PC-3 (cell line): ENCODE measurements at regions of chr17 and their contacts with region 1.

Region 1: GRCh38 chr17:45934044-45934979 is 40.0 kb downstream of the MAPT start:
- DNase-seq: no peak
- ATAC-seq: no peak
- H3K4me3 ChIP-seq: no peak overlapping the region
- H3K27ac ChIP-seq: no peak overlapping the region
- H3K4me1 ChIP-seq: no peaks in the 10 kb centered on the region
- H3K27me3 ChIP-seq: 0 out of 2 replicates have a peak, but pooled peaks cover 11% of the 10 kb centered on the region
- CTCF ChIP-seq: no peak

Region 2: DNA sequence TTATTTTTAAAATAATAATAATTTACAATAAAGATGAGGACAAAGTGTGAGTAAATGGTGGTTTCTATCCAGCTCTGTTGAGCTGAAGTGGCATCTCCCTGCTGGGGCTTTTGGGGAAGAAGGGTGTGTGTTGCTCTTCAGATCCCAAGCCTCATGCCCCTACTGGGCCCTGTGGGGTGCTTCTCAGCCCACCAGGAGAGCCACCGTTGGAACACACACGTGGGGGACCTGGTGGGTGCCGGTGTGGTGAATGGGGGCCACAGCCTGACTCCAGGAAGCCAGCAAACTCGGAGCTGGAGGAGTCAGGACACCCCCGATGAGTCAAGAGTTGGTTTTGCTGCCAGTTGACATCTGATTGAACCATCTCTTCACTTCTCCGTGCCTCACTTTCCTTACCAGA is 26.9 kb after region 1 on chr17:
- CTCF ChIA-PET with region 1: no interaction called
- POLR2A ChIA-PET with region 1: interaction called, 11 read pairs
- intact Hi-C with region 1: no loop called
- DNase-seq: no peak
- ATAC-seq: no peak
- H3K4me3 ChIP-seq: no peak overlapping the region
- H3K27ac ChIP-seq: no peak overlapping the region
- H3K4me1 ChIP-seq: no peaks in the 10 kb centered on the region
- H3K27me3 ChIP-seq: 0 out of 2 replicates have a peak, but pooled peaks cover 1% of the 10 kb centered on the region
- CTCF ChIP-seq: no peak